Dorsolateral prefrontal cortex (tissue), 120 donors: ENCODE measurements at regions of chr1 and their contacts with region 1.

Region 1: DNA sequence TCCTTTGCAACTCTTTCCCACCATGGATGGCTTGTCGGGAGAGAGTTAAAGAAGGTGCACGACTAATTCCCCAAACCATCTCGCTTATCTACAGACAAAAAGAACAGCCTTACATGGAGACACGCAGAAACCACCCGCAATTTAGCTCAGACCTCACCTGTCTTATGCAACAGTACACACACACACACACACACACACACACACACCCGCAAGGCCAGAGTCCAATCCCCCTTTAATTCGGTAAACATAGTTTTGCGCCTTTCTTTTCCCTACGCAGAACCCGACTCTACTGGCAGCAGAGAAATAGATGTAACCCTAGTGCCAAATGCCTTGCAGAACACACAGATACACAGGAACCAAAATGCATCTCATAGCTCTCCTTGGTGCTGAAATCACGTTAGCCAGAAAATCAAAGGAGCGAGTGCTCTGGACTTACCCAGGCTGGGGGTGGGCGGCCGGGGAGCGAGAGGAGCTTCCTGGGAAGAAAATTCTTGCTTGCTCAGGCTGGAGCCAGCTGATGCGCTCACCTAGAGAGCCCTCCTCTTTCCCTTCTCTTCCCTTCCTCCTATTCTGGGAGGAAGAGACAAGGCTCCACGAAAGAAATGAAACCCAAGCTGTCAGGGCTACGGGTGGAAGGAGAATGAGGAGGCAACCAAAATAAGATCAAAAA is 470 bp downstream of the TNR start:
- DNase-seq: peak in 5 of 10 donors; percentile 38 to 58 (median 46)
- H3K4me3 ChIP-seq: peak overlapping the region; percentile 29 to 73 (median 59)
- H3K27ac ChIP-seq: peak overlapping the region in 49 of 59 donors; percentile 1 to 86 (median 66)
- H3K27me3 ChIP-seq: peaks cover 0 to 23% (median 0%) of the 10 kb centered on the region in 45 donors
- CTCF ChIP-seq: no peak

Region 2: GRCh38 chr1:175373786-175374623 is 368.9 kb before region 1 on chr1:
- intact Hi-C with region 1: loop called in 1 of 2 experiments (anchors 10 kb)
- DNase-seq: peak in 6 of 10 donors; percentile 14 to 67 (median 37)
- H3K4me3 ChIP-seq: no peak overlapping the region
- H3K27ac ChIP-seq: no peak overlapping the region
- H3K27me3 ChIP-seq: no peaks in the 10 kb centered on the region
- CTCF ChIP-seq: peak; percentile 40 to 84 (median 74)

Region 3: GRCh38 chr1:175471039-175471800 is 271.7 kb before region 1 on chr1:
- intact Hi-C with region 1: loop called in 1 of 2 experiments (anchors 10 kb)
- DNase-seq: peak in 1 of 10 donors; percentile 30
- H3K4me3 ChIP-seq: no peak overlapping the region
- H3K27ac ChIP-seq: no peak overlapping the region
- H3K27me3 ChIP-seq: peaks cover 0 to 4% (median 0%) of the 10 kb centered on the region in 45 donors
- CTCF ChIP-seq: no peak

Region 4: GRCh38 chr1:175481126-175482066 is 261.5 kb before region 1 on chr1:
- intact Hi-C with region 1: loop called (anchors 5 to 10 kb)
- DNase-seq: no peak
- H3K4me3 ChIP-seq: no peak overlapping the region
- H3K27ac ChIP-seq: no peak overlapping the region
- H3K27me3 ChIP-seq: peaks cover 0 to 4% (median 0%) of the 10 kb centered on the region in 45 donors
- CTCF ChIP-seq: peak; percentile 39 to 77 (median 64)

Region 5: DNA sequence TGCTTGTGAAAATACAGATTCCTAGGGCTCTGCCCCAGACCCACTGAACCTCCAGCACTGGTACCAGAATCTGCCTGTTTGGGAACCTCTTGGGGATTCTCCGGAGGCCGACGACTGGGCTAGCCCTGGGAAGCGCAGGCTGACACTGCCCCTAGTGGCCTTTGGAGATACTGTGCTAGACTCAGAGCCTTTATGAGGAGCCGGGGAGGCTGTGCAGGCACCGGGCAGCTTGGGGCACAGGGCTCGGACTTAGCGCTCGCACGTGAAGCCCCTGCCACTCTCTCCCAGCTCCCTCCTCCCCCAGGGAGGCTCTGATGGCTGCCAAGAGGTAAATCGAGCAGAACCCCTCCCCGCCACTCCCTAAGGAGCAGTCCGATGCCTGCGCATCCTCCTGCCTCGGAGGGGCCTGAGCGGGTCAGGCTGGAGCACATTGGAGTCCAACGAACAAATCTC is 145.1 kb after region 1 on chr1:
- intact Hi-C with region 1: loop called (anchors 2 to 5 kb)
- DNase-seq: peak; percentile 72 to 89 (median 86)
- H3K4me3 ChIP-seq: peak overlapping the region in 12 of 59 donors; percentile 3 to 37 (median 12)
- H3K27ac ChIP-seq: peak overlapping the region in 37 of 59 donors; percentile 1 to 80 (median 55)
- H3K27me3 ChIP-seq: no peaks in the 10 kb centered on the region
- CTCF ChIP-seq: peak; percentile 63 to 96 (median 91)

Region 6: DNA sequence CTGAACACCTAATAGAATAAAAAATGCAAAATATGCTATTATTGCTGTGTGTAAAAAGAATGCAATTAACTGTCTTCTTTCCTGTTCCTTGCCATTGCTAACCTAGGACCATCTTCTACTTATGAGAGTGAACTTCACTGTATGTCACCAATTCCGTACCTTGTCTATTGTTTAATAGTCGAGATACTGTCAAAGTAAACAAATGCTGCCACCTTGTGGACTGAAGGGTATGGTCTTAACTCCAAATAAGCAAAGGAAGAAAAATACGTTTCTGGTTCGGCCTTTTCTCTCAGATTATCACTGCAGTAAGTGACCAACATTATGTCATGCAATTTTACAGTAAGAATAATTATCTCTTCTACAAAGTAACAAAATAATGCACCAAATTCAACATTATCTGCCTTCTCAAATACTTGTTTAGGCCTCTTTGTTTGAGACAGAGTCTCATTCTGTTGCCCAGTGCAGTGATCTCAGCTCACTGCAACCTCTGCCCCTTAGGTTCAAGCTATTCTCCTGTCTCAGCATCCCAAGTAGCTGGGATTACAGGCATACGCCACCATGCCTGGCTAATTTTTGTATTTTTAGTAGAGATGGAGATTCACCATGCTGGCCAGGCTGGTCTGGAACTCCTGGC is 330.7 kb after region 1 on chr1:
- intact Hi-C with region 1: loop called in 1 of 2 experiments (anchors 10 kb)
- DNase-seq: peak in 3 of 10 donors; percentile 6 to 54 (median 44)
- H3K4me3 ChIP-seq: no peak overlapping the region
- H3K27ac ChIP-seq: no peak overlapping the region
- H3K27me3 ChIP-seq: no peaks in the 10 kb centered on the region
- CTCF ChIP-seq: peak; percentile 57 to 95 (median 83)

Region 7: GRCh38 chr1:176193023-176193422 is 450.1 kb after region 1 on chr1:
- intact Hi-C with region 1: no loop called
- DNase-seq: no peak
- H3K4me3 ChIP-seq: no peak overlapping the region
- H3K27ac ChIP-seq: no peak overlapping the region
- H3K27me3 ChIP-seq: no peaks in the 10 kb centered on the region
- CTCF ChIP-seq: no peak